ENCODE measurements at regions of chr7 and their contacts with region 1.

Region 1: DNA sequence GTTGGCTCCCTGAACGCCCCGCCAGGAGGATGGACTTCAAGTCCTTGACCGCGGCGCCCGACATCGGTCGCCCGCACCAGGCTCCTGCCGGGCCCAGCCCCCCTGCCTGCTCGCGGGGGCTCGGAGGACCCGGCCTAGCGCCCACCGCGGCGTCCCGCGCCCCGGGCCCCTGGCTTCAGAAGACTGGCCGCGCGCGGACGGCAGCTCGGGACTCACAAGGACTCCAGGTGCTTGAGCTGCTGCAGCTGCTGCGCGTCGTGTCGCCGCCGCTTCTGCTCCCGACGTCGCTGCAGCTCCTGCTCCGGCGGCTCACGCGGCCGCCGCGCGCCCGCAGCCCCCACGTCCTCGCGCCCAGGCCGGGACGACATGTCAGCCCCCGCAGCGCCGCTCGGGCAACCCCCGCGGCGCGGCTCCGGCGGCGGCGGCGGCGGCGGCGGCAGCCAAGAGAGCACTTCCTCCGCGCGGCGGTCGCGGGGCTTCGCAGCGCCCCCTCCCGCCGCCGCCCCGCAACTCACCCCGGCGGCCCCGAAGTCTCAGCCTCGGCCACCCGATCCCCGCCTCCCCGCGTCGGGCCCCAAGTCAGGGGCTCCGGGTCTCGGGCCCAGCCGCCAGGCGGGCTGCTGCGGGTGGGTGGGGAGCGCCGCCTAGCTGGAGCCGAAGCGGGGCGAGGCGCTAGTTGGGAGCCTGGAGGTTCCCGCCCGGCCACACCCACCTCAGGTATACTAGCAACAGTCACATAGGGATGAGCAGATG is at the start of gene RP9:
- DNase-seq: peak; percentile 84 to 92 (median 89)
- H3K4me3 ChIP-seq: peak within 1 kb of the TSS; percentile 83 to 98 (median 91)
- H3K27ac ChIP-seq: peak within 1 kb of the TSS; percentile 75 to 82
- H3K4me1 ChIP-seq: peaks cover 15 to 31% (median 21%) of the 10 kb centered on the region in 4 experiments
- H3K27me3 ChIP-seq: no peaks in the 10 kb centered on the region

Region 2: GRCh38 chr7:32403463-32404229 is 705.5 kb before region 1 on chr7:
- CTCF ChIA-PET with region 1: no interaction called
- POLR2A ChIA-PET with region 1: no interaction called
- DNase-seq: no peak
- H3K4me3 ChIP-seq: no peak overlapping the region
- H3K27ac ChIP-seq: no peak overlapping the region
- H3K4me1 ChIP-seq: no peaks in the 10 kb centered on the region
- H3K27me3 ChIP-seq: peaks cover 0 to 5% (median 0%) of the 10 kb centered on the region in 5 experiments

Region 3: GRCh38 chr7:32802305-32802910 is 306.8 kb before region 1 on chr7:
- CTCF ChIA-PET with region 1: interaction called, 38 read pairs
- POLR2A ChIA-PET with region 1: no interaction called
- DNase-seq: no peak
- H3K4me3 ChIP-seq: no peak overlapping the region
- H3K27ac ChIP-seq: no peak overlapping the region
- H3K4me1 ChIP-seq: peaks cover 0 to 2% (median 0%) of the 10 kb centered on the region in 4 experiments
- H3K27me3 ChIP-seq: no peaks in the 10 kb centered on the region

Region 4: GRCh38 chr7:32891800-32892520 is 217.2 kb before region 1 on chr7:
- CTCF ChIA-PET with region 1: interaction called, 11 read pairs
- POLR2A ChIA-PET with region 1: no interaction called
- DNase-seq: peak; percentile 94 to 97 (median 97)
- H3K4me3 ChIP-seq: peak overlapping the region; percentile 81 to 98 (median 92)
- H3K27ac ChIP-seq: peak overlapping the region; percentile 93 to 98
- H3K4me1 ChIP-seq: peaks cover 25 to 51% (median 32%) of the 10 kb centered on the region in 4 experiments
- H3K27me3 ChIP-seq: no peaks in the 10 kb centered on the region

Region 5: DNA sequence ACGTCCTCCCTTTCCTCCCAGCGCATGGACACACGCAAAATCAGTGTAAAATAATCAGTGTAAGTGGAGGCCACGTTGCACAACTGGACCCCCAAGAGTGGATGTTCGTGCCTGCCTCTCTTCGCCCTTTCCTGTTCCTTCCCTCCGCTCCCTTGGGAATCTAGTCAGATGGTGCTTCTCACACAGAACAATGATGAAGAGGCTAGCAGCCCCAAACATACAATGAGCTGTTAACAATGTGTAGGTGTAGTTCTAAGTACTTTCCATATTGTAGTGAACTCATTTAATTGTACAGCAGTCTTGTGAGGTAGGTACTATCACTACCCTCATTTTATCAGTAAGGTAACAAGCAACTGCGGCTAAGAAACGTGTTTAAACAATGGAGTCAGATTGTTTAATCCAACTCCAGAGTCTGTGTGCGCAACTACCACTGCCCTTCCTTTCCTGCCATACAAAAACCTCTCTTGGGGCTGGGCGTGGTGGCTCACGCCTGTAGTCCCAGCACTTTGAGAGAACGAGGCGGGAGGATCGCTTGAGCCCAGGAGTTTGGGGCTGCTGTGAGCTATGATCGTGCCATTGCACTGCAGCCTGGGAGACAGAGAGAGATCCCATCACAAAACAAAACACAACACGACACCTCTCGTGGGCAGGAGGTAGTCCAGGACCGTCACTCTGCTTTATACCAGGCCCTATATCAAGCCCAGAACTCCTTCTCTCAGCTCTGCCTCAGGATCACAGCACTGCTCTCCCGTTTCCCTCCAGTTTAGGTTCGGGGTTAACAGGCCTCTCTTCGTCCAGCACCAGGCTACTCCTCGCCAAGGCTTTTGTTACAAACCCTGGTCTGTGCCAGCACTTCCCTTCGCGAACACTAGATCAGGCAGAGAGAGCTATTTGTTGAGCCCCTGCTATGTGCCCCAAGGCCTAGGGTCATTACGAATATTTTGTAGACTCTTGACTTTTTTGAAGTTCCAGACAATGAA is 150.8 kb before region 1 on chr7:
- CTCF ChIA-PET with region 1: interaction called, 19 read pairs
- POLR2A ChIA-PET with region 1: no interaction called
- DNase-seq: no peak
- H3K4me3 ChIP-seq: peak overlapping the region; percentile 41 to 94 (median 81)
- H3K27ac ChIP-seq: no peak overlapping the region
- H3K4me1 ChIP-seq: peaks cover 0 to 16% (median 5%) of the 10 kb centered on the region in 4 experiments
- H3K27me3 ChIP-seq: peaks cover 0 to 8% (median 0%) of the 10 kb centered on the region in 5 experiments

Region 6: GRCh38 chr7:33040803-33041516 is 68.2 kb before region 1 on chr7:
- CTCF ChIA-PET with region 1: interaction called, 11 read pairs
- POLR2A ChIA-PET with region 1: no interaction called
- DNase-seq: peak; percentile 30 to 75 (median 61)
- H3K4me3 ChIP-seq: peak overlapping the region in 6 of 7 experiments; percentile 14 to 73 (median 38)
- H3K27ac ChIP-seq: peak overlapping the region; percentile 9 to 80
- H3K4me1 ChIP-seq: peaks cover 20 to 56% (median 36%) of the 10 kb centered on the region in 4 experiments
- H3K27me3 ChIP-seq: no peaks in the 10 kb centered on the region

Region 7: DNA sequence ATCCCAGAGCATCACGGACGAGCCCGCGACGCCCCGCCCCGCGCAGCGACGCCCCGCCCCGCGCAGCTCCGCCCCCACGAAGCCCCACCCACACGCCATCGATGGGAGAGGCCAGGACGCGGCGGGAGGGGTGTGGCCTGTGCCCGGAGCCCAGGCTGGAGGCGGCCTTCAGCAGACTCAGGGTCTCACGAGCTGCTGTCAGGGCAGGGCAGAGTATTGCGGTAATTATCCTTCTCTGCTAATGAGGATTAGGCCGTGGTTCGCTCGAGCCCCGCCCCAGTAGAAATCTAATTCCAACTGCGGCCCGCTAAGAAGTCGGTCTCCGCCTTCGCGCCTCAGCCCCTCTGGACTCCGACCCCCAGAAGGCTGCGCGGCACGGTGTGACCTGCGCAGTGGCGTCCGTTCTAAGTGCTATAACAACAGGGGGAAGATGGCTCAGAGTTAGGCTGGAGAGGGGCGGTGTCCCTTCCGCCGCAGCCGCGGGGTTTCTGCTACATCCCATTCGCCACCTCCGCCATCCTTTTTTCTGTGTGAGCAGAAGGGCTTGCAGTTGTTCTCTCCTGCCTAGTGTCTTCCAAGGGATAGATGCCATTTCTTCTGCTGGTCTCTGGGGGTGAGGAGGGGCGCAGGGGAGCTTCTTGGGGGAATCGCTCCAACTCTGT is 46.3 kb before region 1 on chr7:
- CTCF ChIA-PET with region 1: interaction called, 36 read pairs
- POLR2A ChIA-PET with region 1: no interaction called
- DNase-seq: peak; percentile 95 to 98 (median 98)
- H3K4me3 ChIP-seq: peak overlapping the region; percentile 92 to 99 (median 97)
- H3K27ac ChIP-seq: peak overlapping the region; percentile 77 to 93
- H3K4me1 ChIP-seq: peaks cover 17 to 45% (median 29%) of the 10 kb centered on the region in 4 experiments
- H3K27me3 ChIP-seq: no peaks in the 10 kb centered on the region

Region 8: GRCh38 chr7:33185786-33186185 is 76.6 kb after region 1 on chr7:
- CTCF ChIA-PET with region 1: no interaction called
- POLR2A ChIA-PET with region 1: no interaction called
- DNase-seq: peak; percentile 34 to 63 (median 55)
- H3K4me3 ChIP-seq: no peak overlapping the region
- H3K27ac ChIP-seq: no peak overlapping the region
- H3K4me1 ChIP-seq: peaks cover 0 to under 1% (median 0%) of the 10 kb centered on the region in 4 experiments
- H3K27me3 ChIP-seq: no peaks in the 10 kb centered on the region